ENCODE measurements at regions of chr21 and their contacts with region 1.

Region 1: DNA sequence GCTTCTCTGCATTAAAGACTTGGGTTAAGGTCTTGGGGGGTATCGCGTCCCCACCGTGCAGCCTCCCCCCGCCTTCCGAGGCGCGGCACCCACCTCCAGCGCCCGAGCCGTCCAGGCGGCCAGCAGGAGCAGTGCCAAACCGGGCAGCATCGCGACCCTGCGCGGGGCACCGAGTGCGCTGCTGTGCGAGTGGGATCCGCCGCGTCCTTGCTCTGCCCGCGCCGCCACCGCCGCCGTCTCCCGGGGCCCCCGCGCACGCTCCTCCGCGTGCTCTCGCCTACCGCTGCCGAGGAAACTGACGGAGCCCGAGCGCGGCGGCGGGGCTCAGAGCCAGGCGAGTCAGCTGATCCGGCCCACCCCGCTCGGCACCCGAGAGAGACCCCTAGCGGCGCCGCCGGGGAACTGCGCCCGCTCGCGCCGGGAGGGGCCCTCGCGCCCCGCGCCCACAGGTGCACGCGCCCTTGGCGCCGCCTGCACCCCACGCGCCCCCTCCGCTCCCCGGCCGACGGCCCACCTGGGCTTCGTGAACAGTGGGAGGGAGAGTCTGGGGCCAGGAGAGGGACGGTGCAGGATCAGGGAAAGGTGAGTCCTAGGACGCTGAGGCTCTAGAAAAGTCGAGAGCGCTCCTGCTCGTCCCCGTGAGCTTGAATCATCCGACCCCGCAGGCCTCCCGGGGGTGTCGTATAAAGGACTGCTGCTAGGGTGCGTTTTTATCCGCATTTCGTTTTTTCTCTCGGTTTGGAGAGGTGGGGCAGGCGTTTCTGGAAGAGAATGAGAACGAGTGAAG is at the start of gene APP:
- DNase-seq: peak; percentile 43
- H3K4me3 ChIP-seq: peak within 1 kb of the TSS; percentile 85
- H3K27ac ChIP-seq: peak within 1 kb of the TSS; percentile 77
- H3K27me3 ChIP-seq: peaks cover 6% of the 10 kb centered on the region
- CTCF ChIP-seq: peak; percentile 65
- polyA plus RNA-seq, gene APP: 793 and 870 TPM in 2 replicates

Region 2: DNA sequence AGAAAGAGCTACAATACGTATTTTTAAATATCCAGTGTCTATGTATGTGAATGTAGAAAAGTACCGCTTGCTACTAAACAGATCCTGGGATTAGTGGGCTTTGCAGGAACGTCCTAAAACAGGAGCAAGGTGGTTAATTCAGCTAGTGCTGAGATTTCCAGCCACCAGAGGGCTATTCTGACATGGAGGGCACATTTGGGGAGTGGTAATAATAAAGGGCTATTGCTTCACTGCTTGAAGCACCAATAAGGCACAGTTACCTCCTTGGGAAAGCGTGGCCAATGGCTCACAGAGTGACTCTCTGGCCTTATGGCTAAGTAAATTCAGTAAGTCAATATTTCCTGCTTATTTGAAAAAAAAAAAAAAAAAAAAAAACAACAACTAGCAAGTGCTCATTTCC is 283.5 kb before region 1 on chr21:
- CTCF ChIA-PET with region 1: interaction called, 11 read pairs
- POLR2A ChIA-PET with region 1: no interaction called
- DNase-seq: no peak
- H3K4me3 ChIP-seq: no peak overlapping the region
- H3K27ac ChIP-seq: no peak overlapping the region
- H3K27me3 ChIP-seq: no peaks in the 10 kb centered on the region
- CTCF ChIP-seq: peak; percentile 35

Region 3: GRCh38 chr21:25895565-25896205 is 275.0 kb before region 1 on chr21:
- CTCF ChIA-PET with region 1: interaction called, 21 read pairs
- POLR2A ChIA-PET with region 1: no interaction called
- DNase-seq: no peak
- H3K4me3 ChIP-seq: no peak overlapping the region
- H3K27ac ChIP-seq: no peak overlapping the region
- H3K27me3 ChIP-seq: no peaks in the 10 kb centered on the region
- CTCF ChIP-seq: peak; percentile 63

Region 4: DNA sequence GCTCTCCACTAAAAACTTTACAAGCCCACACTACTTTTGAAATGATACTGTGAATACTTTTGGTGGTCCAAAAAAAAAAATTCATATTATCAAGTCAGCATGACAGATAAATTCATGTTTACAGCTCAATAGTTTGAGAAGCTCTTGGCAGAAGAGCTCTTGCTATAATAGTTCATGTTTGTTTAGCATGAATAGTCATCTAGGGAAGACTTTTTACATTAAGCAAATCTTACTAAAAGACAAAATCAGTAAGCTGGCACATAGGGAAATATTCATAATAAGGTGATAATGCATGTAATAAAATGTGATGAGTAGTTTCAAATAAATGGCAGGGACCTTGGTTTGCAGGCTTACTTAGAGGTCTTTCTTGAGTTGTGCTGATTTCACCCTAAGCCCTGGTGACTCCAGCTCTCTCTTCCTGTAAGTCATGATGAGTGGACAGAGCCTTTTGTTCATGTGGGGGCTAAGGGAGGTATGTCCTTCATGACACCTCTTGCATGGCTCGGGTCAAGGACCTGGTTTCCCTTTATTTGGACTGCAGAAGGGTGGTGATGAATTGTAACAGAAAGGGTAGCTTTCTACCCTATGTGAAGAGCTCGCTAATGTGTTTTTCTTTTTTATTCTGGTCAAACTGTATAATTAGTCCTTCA is 269.2 kb before region 1 on chr21:
- CTCF ChIA-PET with region 1: interaction called, 21 read pairs
- POLR2A ChIA-PET with region 1: no interaction called
- DNase-seq: no peak
- H3K4me3 ChIP-seq: no peak overlapping the region
- H3K27ac ChIP-seq: no peak overlapping the region
- H3K27me3 ChIP-seq: no peaks in the 10 kb centered on the region
- CTCF ChIP-seq: no peak

Region 5: GRCh38 chr21:26157801-26158200 is 12.9 kb before region 1 on chr21:
- CTCF ChIA-PET with region 1: interaction called, 10 read pairs
- POLR2A ChIA-PET with region 1: no interaction called
- DNase-seq: no peak
- H3K4me3 ChIP-seq: no peak overlapping the region
- H3K27ac ChIP-seq: no peak overlapping the region
- H3K27me3 ChIP-seq: no peaks in the 10 kb centered on the region
- CTCF ChIP-seq: no peak